Aorta (tissue), 5 donors: ENCODE measurements at regions of chr11 and their contacts with region 1.

Region 1: GRCh38 chr11:29159552-29160465 is 857.0 kb downstream of the KCNA4 start:
- DNase-seq: peak in 1 of 2 donors; percentile 48
- ATAC-seq: no peak
- H3K4me3 ChIP-seq: no peak overlapping the region
- H3K27ac ChIP-seq: no peak overlapping the region
- H3K4me1 ChIP-seq: no peaks in the 10 kb centered on the region
- H3K27me3 ChIP-seq: no peaks in the 10 kb centered on the region

Region 2: GRCh38 chr11:27698872-27699474 is 1460.8 kb before region 1 on chr11:
- intact Hi-C with region 1: loop called in 1 of 2 experiments (anchors 10 kb)
- DNase-seq: peak; percentile 75 to 92
- ATAC-seq: peak; percentile 92
- H3K4me3 ChIP-seq: peak overlapping the region; percentile 55 to 95
- H3K27ac ChIP-seq: no peak overlapping the region
- H3K4me1 ChIP-seq: peaks cover 0 to 5% of the 10 kb centered on the region in 2 donors
- H3K27me3 ChIP-seq: no peaks in the 10 kb centered on the region

Region 3: DNA sequence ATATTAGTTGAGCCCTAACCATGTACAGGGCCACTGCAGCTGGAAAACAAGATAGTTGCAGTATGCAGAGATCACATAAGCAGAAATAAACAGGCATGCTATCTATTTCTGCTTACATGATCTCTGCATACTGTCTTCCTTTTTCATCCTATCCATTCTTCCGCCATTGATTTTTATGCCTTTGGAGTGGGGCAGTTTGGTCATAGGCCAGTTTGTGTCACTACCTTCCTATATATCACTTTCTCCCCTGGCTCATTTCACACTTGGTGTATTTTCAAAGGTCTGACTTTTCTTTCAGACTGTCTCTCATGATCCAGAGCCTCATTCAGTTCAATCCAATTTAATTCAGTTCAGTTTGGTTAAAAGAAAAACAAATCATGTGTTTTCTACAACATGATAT is 27.4 kb after region 1 on chr11:
- intact Hi-C with region 1: no loop called
- DNase-seq: no peak
- ATAC-seq: no peak
- H3K4me3 ChIP-seq: no peak overlapping the region
- H3K27ac ChIP-seq: no peak overlapping the region
- H3K4me1 ChIP-seq: no peaks in the 10 kb centered on the region
- H3K27me3 ChIP-seq: no peaks in the 10 kb centered on the region